B cell (primary cell): ENCODE measurements at regions of chr17 and their contacts with region 1.

Region 1: GRCh38 chr17:4004517-4005295 is 40.5 kb upstream of the ATP2A3 start:
- DNase-seq: peak; percentile 80
- ATAC-seq: peak; percentile 71
- H3K4me3 ChIP-seq: no peak overlapping the region
- H3K4me3 Mint-ChIP-seq: peak overlapping the region; percentile 20
- H3K27ac ChIP-seq: no peak overlapping the region
- H3K27ac Mint-ChIP-seq: no peak overlapping the region
- H3K4me1 ChIP-seq: peaks cover 16 to 35% of the 10 kb centered on the region in 2 donors
- H3K4me1 Mint-ChIP-seq: peaks cover 27% of the 10 kb centered on the region
- H3K27me3 ChIP-seq: no peaks in the 10 kb centered on the region
- H3K27me3 Mint-ChIP-seq: no peaks in the 10 kb centered on the region
- CTCF ChIP-seq: peak; percentile 98

Region 2: DNA sequence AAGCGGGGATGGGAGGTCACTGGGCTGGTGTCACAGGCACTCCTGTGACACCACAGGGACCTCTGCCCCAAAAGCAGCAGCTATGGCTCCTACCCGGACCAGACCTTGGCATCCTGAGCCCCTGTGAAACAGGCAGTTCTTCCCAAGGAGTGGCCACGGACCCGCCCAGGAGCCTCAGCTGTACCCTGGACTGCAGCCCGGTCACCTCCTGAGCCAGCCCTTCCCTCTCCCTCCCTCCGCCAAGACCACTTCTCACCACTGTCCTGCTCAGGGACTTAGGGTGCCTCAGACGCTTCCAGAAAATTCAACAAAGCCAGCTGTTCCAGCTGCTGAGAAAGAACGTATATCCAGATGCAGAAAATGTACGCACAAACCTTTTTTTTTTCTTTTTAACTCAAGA is 144.8 kb before region 1 on chr17:
- CTCF ChIA-PET with region 1: interaction called, 37 read pairs
- POLR2A ChIA-PET with region 1: no interaction called
- intact Hi-C with region 1: no loop called
- DNase-seq: no peak
- ATAC-seq: no peak
- H3K4me3 ChIP-seq: no peak overlapping the region
- H3K4me3 Mint-ChIP-seq: no peak overlapping the region
- H3K27ac ChIP-seq: no peak overlapping the region
- H3K27ac Mint-ChIP-seq: no peak overlapping the region
- H3K4me1 ChIP-seq: no peaks in the 10 kb centered on the region
- H3K4me1 Mint-ChIP-seq: no peaks in the 10 kb centered on the region
- H3K27me3 ChIP-seq: no peaks in the 10 kb centered on the region
- H3K27me3 Mint-ChIP-seq: no peaks in the 10 kb centered on the region
- CTCF ChIP-seq: no peak

Region 3: DNA sequence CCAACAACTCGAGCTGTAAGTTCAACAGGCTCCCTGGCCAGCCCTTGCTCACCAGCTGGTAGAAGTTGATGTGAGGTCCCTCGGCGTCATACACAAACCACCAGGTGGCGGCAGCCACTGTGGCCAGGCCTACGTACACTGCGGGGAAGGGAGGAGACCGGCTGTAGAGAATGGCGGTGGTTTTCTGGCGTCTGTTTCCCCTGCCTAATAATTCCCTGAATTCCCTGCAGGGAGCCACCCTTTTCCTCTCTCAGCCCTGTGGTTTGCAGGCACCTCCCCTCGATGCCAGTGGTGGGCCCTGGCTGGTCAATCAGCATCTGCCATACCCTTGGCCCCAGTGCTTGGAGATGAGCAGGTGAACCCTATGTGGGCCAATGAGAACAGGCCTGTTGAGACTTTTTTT is 69.6 kb before region 1 on chr17:
- CTCF ChIA-PET with region 1: interaction called, 8 read pairs
- POLR2A ChIA-PET with region 1: interaction called, 10 read pairs
- intact Hi-C with region 1: loop called (anchors 1 kb)
- DNase-seq: peak; percentile 72
- ATAC-seq: peak; percentile 61
- H3K4me3 ChIP-seq: no peak overlapping the region
- H3K4me3 Mint-ChIP-seq: no peak overlapping the region
- H3K27ac ChIP-seq: peak overlapping the region in 1 of 2 donors; percentile 30
- H3K27ac Mint-ChIP-seq: peak overlapping the region; percentile 61
- H3K4me1 ChIP-seq: no peaks in the 10 kb centered on the region
- H3K4me1 Mint-ChIP-seq: no peaks in the 10 kb centered on the region
- H3K27me3 ChIP-seq: no peaks in the 10 kb centered on the region
- H3K27me3 Mint-ChIP-seq: no peaks in the 10 kb centered on the region
- CTCF ChIP-seq: peak; percentile 57

Region 4: DNA sequence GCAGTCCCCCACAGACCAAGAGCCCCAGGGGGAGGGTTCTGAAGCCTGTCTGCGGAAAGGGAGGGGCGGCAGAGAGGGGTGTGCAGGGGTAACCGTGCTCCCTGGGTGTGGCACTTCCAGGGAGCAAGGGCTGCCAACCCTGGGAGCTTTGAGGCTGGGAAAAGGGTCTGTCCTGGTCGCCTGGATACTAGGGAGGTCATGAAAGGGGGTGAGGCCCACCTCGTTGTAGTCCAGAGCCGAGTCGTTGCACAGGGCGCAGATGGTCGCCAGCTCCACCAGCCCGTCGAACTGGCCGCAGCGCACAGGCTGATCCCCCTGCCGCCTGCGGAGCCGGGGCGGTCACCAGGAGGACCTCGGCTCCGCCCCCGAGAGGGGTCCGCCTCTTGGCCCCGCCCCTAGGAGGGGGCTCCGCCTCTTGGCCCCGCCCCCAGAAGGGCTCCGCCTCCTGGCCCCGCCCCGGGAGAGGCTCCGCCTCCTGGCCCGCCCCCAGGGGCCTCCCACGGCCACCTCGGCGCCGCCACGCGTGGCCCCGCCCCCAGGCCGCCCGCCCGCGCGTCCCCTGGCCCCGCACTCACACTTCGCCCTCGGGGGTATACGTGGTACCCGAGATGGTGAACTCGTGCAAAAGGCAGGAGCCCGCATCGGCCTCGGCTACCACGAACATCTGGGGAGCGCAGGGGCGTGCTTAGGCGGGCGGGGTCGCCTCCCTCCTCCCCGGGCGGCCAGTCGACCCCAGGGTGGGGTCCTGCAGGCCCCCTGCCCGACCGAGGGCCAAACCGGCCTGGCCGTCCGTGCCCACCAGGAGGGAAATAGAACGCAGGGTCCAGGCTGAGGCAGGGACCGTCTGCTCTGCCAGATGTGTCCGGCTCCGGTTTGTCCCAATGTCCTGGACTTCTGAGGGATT is 60.0 kb before region 1 on chr17:
- CTCF ChIA-PET with region 1: interaction called, 4 read pairs
- POLR2A ChIA-PET with region 1: no interaction called
- intact Hi-C with region 1: loop called (anchors 2 kb)
- DNase-seq: peak; percentile 48
- ATAC-seq: peak; percentile 82
- H3K4me3 ChIP-seq: no peak overlapping the region
- H3K4me3 Mint-ChIP-seq: no peak overlapping the region
- H3K27ac ChIP-seq: no peak overlapping the region
- H3K27ac Mint-ChIP-seq: peak overlapping the region; percentile 26
- H3K4me1 ChIP-seq: no peaks in the 10 kb centered on the region
- H3K4me1 Mint-ChIP-seq: no peaks in the 10 kb centered on the region
- H3K27me3 ChIP-seq: no peaks in the 10 kb centered on the region
- H3K27me3 Mint-ChIP-seq: no peaks in the 10 kb centered on the region
- CTCF ChIP-seq: no peak